Sciatic nerve (tissue), 2 donors: ENCODE measurements at regions of chr16 and their contacts with region 1.

Region 1: GRCh38 chr16:14534546-14534945 is 95.5 kb downstream of the PARN start:
- DNase-seq: no peak
- ATAC-seq: no peak

Region 2: DNA sequence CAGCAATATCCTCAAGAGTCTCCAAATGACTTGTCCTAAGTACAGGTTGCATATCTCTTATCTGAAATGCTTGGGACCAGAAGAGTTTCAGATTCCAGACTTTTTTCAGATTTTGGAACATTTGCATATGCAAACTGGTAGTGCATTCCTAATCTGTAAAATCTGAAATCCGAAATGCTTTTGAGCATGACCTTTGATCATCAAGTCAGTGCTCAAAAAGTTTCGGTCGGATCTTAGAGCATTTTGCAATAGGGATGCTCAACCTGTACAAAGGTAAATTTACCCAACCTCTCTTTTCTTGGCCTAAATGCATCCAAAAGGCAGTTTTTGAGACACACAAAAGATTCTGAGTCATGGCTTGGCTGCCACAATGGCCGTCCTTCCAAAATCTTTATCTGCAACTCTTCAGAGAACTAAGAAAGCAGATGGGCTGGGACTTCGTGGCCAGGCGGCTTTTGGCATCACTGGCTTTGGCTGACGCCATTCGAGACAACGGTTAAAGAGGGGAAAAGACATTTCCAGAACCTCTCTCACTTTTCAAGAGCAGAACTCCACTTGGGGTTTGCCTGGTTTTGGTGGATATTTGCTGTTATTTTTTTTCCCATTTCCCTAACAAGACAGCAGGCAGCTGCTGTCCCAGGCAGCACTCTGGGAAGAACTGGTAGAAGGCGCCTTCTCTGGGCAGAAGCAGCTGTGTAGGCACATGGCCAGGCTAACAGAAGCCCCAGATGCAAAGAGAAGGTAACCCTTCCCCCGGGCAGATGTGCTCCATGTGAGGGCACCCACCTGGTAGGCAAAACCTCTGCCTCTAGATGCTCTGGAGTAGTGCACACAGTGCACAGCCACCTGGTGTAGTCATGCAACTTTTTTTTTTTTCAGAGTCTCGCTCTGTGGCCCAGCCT is 1739.8 kb before region 1 on chr16:
- intact Hi-C with region 1: no loop called
- DNase-seq: no peak
- ATAC-seq: peak; percentile 15

Region 3: GRCh38 chr16:14249291-14250032 is 285.1 kb before region 1 on chr16:
- intact Hi-C with region 1: loop called (anchors 5 kb)
- DNase-seq: no peak
- ATAC-seq: peak; percentile 30

Region 4: DNA sequence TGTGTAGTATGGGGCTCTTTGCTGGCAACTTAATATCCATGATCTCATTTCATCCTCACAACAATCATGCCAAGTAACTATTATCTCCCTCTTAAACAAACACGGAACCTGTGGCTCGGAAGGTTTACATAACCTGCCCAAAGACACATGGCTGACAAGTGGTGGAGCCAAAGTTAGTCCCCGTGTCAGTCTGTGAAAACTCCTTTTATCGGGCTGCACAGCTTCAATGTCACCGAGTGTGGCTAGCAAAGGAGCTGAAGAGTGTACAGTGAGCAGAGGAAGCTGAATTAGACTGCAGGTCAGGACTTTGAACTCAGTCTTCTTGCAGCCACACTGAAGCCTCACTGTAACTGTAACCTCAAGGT is 15.2 kb after region 1 on chr16:
- intact Hi-C with region 1: no loop called
- DNase-seq: no peak
- ATAC-seq: no peak

Region 5: GRCh38 chr16:16021988-16022682 is 1487.6 kb after region 1 on chr16:
- intact Hi-C with region 1: no loop called
- DNase-seq: peak; percentile 93
- ATAC-seq: peak; percentile 96